ENCODE measurements at regions of chr16 and their contacts with region 1.

Region 1: GRCh38 chr16:49399594-49400364 is 26.2 kb downstream of the C16orf78 start:
- DNase-seq: peak; percentile 91
- H3K4me3 ChIP-seq: peak overlapping the region; percentile 45
- H3K27ac ChIP-seq: peak overlapping the region; percentile 80
- H3K4me1 ChIP-seq: peaks cover 34% of the 10 kb centered on the region
- CTCF ChIP-seq: no peak

Region 2: DNA sequence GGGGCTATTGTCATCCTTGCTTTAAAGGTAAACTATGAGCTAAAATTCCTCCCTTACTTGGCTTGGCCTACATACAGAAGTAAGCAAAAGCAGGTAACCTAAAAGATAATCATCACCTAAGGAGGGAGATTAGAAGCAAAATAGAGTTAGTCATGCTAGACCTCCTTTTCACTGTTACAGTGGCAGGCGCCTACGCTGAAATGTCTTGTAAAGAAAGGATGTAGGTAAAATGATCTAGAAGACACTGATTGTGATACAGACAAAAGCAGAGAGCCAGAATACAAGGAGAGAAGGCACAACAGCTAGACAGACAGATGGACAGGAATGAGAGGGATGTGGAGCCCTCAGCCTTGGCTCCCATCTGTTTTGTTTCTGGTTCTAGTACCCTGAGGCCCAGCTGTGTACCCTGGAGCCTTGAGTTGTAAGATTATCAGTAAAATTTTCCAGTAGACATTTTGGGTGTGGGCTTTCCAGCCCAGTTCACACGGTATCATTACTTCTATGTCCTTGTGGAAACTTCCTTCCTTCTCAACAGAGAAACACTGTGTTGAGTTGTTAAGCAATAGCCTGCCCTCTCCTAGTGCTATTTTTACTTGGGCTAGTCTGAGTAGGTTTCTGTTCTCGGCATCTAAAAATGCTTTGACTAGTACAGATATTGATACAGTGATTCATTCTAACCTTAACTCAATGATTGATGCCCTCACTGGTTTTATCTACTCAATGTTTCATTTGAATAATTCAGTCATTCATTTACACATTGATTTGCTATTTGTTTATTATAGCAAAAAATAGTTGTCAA is 33.9 kb before region 1 on chr16:
- CTCF ChIA-PET with region 1: no interaction called
- POLR2A ChIA-PET with region 1: interaction called, 24 read pairs
- intact Hi-C with region 1: loop called (anchors 1 kb)
- DNase-seq: peak; percentile 63
- H3K4me3 ChIP-seq: peak overlapping the region; percentile 30
- H3K27ac ChIP-seq: peak overlapping the region; percentile 94
- H3K4me1 ChIP-seq: peaks cover 41% of the 10 kb centered on the region
- CTCF ChIP-seq: no peak

Region 3: GRCh38 chr16:49382916-49383315 is 16.9 kb before region 1 on chr16:
- CTCF ChIA-PET with region 1: interaction called, 4 read pairs
- POLR2A ChIA-PET with region 1: interaction called, 9 read pairs
- intact Hi-C with region 1: loop called (anchors 2 kb)
- DNase-seq: peak; percentile 54
- H3K4me3 ChIP-seq: no peak overlapping the region
- H3K27ac ChIP-seq: no peak overlapping the region
- H3K4me1 ChIP-seq: no peaks in the 10 kb centered on the region
- CTCF ChIP-seq: peak; percentile 74

Measured in OCI-LY7 (cell line).